Activated naive CD4-positive, alpha-beta T cell treated with anti-CD3 and anti-CD28 coated beads for 36 hours (primary cell): ENCODE measurements at regions of chr7 and their contacts with region 1.

Region 1: DNA sequence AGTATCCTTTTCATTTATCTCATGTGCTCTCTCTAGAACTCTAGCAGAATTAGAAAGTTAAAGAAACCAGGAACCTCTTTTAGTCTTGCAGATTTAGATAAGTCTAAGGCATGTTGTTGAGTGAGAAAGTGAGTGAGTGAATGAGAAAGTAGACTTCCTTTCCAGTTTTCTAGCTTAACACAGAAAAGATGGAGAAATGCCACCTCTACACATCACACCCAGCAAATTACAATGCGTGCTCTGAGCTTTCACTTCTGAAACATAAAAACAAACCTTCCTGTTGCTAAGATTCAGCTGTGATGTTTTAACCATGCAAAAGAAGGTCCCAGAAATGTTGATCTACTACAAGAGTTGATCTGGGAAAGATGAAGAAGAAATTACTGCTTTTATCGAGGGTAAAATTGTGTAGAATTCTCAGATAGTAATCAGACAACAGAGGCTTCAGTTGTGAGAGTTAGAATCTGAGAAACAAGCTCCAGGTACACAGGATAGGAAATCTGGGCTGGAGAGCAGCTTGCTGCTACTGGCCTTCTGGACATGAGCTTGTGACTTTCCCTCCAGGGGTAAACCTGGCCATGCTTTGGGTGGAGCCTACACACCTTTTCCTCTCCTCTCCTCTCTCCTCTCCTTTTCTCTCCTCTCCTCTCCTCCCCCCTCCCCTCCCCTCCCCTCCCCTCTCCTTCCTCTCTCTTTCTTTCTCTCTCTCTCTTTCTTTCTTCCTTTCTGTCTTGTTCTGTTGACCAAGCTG is 4.6 kb downstream of the CYP3A5 start:
- DNase-seq: peak; percentile 33
- H3K4me3 Mint-ChIP-seq: peak overlapping the region; percentile 30
- H3K27ac Mint-ChIP-seq: peak overlapping the region; percentile 90
- H3K4me1 Mint-ChIP-seq: peaks cover 35% of the 10 kb centered on the region
- H3K27me3 Mint-ChIP-seq: no peaks in the 10 kb centered on the region

Region 2: GRCh38 chr7:97697396-97697795 is 1977.8 kb before region 1 on chr7:
- CTCF ChIA-PET with region 1: no interaction called
- intact Hi-C with region 1: no loop called
- DNase-seq: no peak
- H3K4me3 Mint-ChIP-seq: no peak overlapping the region
- H3K27ac Mint-ChIP-seq: no peak overlapping the region
- H3K4me1 Mint-ChIP-seq: no peaks in the 10 kb centered on the region
- H3K27me3 Mint-ChIP-seq: peaks cover 2% of the 10 kb centered on the region

Region 3: GRCh38 chr7:99642027-99642426 is 33.1 kb before region 1 on chr7:
- CTCF ChIA-PET with region 1: no interaction called
- intact Hi-C with region 1: loop called (anchors 1 kb)
- DNase-seq: no peak
- H3K4me3 Mint-ChIP-seq: no peak overlapping the region
- H3K27ac Mint-ChIP-seq: peak overlapping the region; percentile 33
- H3K4me1 Mint-ChIP-seq: peaks cover 44% of the 10 kb centered on the region
- H3K27me3 Mint-ChIP-seq: no peaks in the 10 kb centered on the region

Region 4: DNA sequence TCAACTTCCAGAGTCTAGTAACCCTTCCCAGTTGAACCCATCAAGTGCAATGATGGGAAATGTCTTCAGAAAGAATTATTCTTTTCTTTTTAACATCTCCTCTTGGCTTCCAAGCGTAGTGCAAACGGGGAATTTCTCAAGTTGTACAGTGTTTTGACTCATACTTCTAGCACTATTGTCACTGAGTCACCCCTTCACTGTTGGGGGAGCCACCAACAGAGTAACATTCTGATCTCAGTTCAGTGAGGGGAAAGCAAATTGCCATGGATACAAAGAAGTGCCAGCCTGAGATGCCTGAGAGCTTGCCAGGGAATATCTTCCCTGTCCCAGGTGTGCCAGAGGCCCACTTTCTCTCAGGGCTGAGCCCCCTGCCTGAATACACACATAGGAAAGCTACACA is 26.3 kb before region 1 on chr7:
- CTCF ChIA-PET with region 1: no interaction called
- intact Hi-C with region 1: loop called (anchors 1 kb)
- DNase-seq: peak; percentile 74
- H3K4me3 Mint-ChIP-seq: no peak overlapping the region
- H3K27ac Mint-ChIP-seq: peak overlapping the region; percentile 84
- H3K4me1 Mint-ChIP-seq: peaks cover 18% of the 10 kb centered on the region
- H3K27me3 Mint-ChIP-seq: no peaks in the 10 kb centered on the region

Region 5: DNA sequence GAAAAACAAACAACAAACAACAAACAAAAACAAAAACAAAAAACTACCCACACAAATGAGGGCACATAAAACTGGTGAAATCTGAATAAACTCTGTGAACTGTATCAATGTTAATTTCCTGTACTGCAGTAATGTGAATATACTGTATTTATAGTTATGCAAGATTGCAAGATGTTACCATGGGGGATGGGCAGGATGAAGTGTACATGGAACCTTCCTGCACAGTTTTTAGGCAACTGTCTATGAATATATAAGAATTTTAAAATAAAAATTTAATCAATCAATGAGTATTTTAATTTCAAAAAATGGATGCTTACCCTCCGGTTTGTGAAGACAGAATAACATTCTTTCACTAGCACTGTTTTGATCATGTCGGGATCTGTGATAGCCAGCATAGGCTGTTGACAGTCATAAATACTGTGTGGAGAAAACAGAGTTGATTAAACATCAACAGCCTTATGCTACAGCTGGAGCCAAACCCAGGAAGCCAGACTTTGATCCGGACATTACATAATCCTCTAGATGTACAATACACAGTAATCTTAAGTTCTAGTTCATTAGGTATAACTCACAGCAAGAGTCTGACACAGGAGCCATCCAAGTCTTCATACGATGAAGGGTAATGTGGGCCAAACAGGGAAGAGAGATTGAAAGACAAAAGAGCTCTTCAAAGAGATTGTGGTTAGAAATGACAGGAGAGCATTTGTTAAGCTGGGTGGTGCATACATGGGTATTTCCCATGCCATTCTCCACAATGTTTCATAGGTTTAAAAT is 45.0 kb after region 1 on chr7:
- CTCF ChIA-PET with region 1: no interaction called
- intact Hi-C with region 1: loop called (anchors 1 kb)
- DNase-seq: no peak
- H3K4me3 Mint-ChIP-seq: no peak overlapping the region
- H3K27ac Mint-ChIP-seq: no peak overlapping the region
- H3K4me1 Mint-ChIP-seq: peaks cover 19% of the 10 kb centered on the region
- H3K27me3 Mint-ChIP-seq: no peaks in the 10 kb centered on the region

Region 6: DNA sequence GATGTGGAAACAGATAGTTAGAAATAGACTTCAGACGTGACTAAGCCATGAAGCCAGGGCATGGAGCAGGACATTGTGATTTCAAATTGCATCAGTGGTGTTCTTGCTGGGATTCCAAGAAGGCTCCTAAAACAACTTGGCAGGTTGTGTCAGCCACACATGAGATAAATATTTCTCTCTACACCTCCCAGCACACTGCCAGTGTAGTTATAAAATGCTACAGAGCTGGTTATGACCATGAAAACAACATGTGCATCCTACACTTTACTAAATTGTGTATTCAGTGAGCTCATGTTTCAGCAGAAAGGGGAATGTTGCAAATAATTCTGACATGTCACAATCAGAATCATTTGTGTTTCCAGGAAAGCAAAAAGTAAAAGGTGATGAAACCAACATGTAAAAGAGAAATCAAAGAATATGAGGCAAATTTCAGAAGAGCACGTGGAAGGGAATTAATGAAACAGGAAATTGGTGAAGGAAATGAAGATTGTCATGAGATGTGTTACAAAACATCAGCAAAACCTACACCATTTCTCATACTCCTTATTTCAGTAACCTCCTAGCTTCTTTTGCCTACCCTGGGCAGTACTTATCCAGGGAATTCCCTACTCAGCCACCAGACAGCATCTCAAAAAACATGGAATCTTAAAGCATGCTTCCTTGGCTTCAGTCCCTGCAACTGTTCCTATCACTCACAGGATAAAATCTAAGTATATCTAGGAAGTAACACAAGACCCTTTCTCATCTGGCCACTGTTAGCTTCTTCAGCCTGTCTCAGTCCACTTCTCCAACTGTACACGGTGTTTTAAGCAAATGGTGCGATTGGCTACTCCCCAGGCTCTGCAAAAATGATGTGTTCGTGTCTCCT is 65.6 kb after region 1 on chr7:
- CTCF ChIA-PET with region 1: no interaction called
- intact Hi-C with region 1: loop called (anchors 1 kb)
- DNase-seq: no peak
- H3K4me3 Mint-ChIP-seq: no peak overlapping the region
- H3K27ac Mint-ChIP-seq: peak overlapping the region; percentile 22
- H3K4me1 Mint-ChIP-seq: peaks cover 15% of the 10 kb centered on the region
- H3K27me3 Mint-ChIP-seq: peaks cover 4% of the 10 kb centered on the region